Caco-2 (cell line): ENCODE measurements at regions of chr3 and their contacts with region 1.

Region 1: DNA sequence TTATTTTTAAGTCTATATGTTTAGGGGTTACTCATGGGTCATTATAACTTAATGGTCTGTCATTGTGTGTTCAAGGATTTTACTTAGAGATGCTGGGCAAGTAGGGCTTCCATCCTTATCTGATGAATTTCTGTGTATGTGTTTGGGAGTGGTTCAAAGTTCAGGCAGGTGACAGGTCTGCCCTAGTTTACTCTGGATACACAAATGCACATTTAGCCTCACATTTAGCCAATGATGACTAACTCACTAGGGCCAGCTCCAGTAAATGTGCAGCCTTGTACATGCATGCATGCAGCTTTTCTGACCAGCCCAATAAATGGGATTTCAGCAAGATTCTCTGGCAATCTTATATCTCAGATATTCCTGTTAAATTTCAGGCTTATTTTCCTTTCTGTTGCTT is 554.1 kb downstream of the SI start:
- DNase-seq: peak; percentile 54 to 61
- H3K4me3 ChIP-seq: no peak overlapping the region
- H3K4me3 Mint-ChIP-seq: no peak overlapping the region
- H3K27ac Mint-ChIP-seq: no peak overlapping the region
- H3K4me1 ChIP-seq: peaks cover 7% of the 10 kb centered on the region
- H3K4me1 Mint-ChIP-seq: peaks cover 14% of the 10 kb centered on the region
- H3K27me3 ChIP-seq: no peaks in the 10 kb centered on the region
- H3K27me3 Mint-ChIP-seq: no peaks in the 10 kb centered on the region
- CTCF ChIP-seq: no peak

Region 2: GRCh38 chr3:164200059-164200823 is 324.0 kb before region 1 on chr3:
- CTCF ChIA-PET with region 1: no interaction called
- POLR2A ChIA-PET with region 1: no interaction called
- intact Hi-C with region 1: loop called (anchors 1 kb)
- DNase-seq: peak in 1 of 2 experiments; percentile 39
- H3K4me3 ChIP-seq: no peak overlapping the region
- H3K4me3 Mint-ChIP-seq: no peak overlapping the region
- H3K27ac Mint-ChIP-seq: no peak overlapping the region
- H3K4me1 ChIP-seq: no peaks in the 10 kb centered on the region
- H3K4me1 Mint-ChIP-seq: no peaks in the 10 kb centered on the region
- H3K27me3 ChIP-seq: no peaks in the 10 kb centered on the region
- H3K27me3 Mint-ChIP-seq: no peaks in the 10 kb centered on the region
- CTCF ChIP-seq: no peak

Region 3: DNA sequence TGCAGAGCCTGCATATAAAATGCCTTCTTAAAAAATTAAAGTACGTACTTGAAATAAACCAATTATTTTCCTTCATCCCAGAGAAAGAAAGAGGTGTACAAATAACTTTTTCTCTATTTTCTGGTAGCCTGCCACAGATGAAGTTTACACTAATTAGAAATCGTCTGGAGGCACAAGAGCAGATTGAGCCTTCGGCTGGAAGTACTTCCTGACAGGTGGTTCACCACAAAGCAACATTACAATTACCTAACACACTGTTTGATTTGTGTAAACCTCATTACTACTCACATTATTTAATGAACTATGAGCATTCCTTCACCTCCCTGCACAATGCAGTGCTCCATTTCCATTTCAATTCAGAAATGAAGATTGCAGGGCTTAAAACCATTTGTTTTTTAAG is 302.0 kb before region 1 on chr3:
- CTCF ChIA-PET with region 1: no interaction called
- POLR2A ChIA-PET with region 1: no interaction called
- intact Hi-C with region 1: no loop called
- DNase-seq: no peak
- H3K4me3 ChIP-seq: no peak overlapping the region
- H3K4me3 Mint-ChIP-seq: no peak overlapping the region
- H3K27ac Mint-ChIP-seq: no peak overlapping the region
- H3K4me1 ChIP-seq: no peaks in the 10 kb centered on the region
- H3K4me1 Mint-ChIP-seq: no peaks in the 10 kb centered on the region
- H3K27me3 ChIP-seq: no peaks in the 10 kb centered on the region
- H3K27me3 Mint-ChIP-seq: no peaks in the 10 kb centered on the region
- CTCF ChIP-seq: no peak

Region 4: GRCh38 chr3:164467007-164467406 is 57.2 kb before region 1 on chr3:
- CTCF ChIA-PET with region 1: no interaction called
- POLR2A ChIA-PET with region 1: no interaction called
- intact Hi-C with region 1: loop called (anchors 1 kb)
- DNase-seq: no peak
- H3K4me3 ChIP-seq: no peak overlapping the region
- H3K4me3 Mint-ChIP-seq: no peak overlapping the region
- H3K27ac Mint-ChIP-seq: no peak overlapping the region
- H3K4me1 ChIP-seq: peaks cover 11% of the 10 kb centered on the region; the same call in 1 of the 2 replicates
- H3K4me1 Mint-ChIP-seq: peaks cover 11% of the 10 kb centered on the region
- H3K27me3 ChIP-seq: no peaks in the 10 kb centered on the region
- H3K27me3 Mint-ChIP-seq: no peaks in the 10 kb centered on the region
- CTCF ChIP-seq: no peak

Region 5: GRCh38 chr3:164558687-164559086 is 34.5 kb after region 1 on chr3:
- CTCF ChIA-PET with region 1: no interaction called
- POLR2A ChIA-PET with region 1: no interaction called
- intact Hi-C with region 1: no loop called
- DNase-seq: no peak
- H3K4me3 ChIP-seq: no peak overlapping the region
- H3K4me3 Mint-ChIP-seq: no peak overlapping the region
- H3K27ac Mint-ChIP-seq: no peak overlapping the region
- H3K4me1 ChIP-seq: no peaks in the 10 kb centered on the region
- H3K4me1 Mint-ChIP-seq: no peaks in the 10 kb centered on the region
- H3K27me3 ChIP-seq: no peaks in the 10 kb centered on the region
- H3K27me3 Mint-ChIP-seq: no peaks in the 10 kb centered on the region
- CTCF ChIP-seq: no peak